Activated CD4-positive, alpha-beta T cell treated with anti-CD3 and anti-CD28 coated beads for 36 hours (primary cell): ENCODE measurements at regions of chr10 and their contacts with region 1.

Region 1: DNA sequence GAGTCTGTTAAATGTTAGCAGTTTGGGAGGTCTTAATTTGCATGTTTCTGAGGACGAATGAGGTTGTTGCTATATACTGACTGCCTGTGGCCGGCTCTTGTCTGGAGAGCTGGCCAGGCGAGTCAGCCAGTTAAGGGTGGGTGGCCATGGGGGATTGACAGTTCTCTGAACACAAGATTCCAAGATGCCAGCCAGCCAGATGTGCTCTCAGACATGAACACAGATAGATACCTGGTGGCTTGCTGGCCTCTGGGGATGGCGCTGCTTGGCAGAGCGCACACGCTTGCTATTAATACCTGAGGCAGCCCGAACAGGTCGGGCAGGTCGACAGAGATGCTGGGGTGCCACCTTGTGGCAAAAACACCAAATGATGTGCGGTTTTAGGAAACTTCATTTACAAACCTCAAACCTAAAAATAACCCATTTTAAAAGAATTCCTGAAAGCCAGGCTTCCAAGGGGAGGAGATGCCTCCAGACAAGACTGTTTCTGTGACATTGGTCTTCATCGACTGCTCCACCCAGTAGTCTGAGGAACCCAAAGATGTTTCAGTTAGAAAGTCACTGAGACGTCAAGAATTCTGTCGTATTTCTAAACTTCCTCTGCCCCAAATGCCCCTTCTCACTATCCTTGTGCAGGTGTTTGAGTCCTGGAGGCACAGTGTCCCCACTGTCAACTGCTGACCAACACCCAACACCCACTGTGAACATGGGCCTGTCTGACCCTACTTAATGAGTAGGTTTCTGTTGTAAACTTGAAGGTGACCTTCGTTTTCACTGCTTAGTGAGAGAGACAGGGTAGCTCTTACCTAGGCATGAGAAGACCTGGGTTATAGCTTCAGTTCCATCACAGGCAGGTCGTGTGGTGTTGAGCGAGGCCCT is 123.4 kb downstream of the NT5C2 start:
- DNase-seq: peak; percentile 84
- ATAC-seq: peak; percentile 86
- H3K4me3 Mint-ChIP-seq: no peak overlapping the region
- H3K27ac Mint-ChIP-seq: no peak overlapping the region
- H3K4me1 Mint-ChIP-seq: peaks cover 12% of the 10 kb centered on the region
- H3K27me3 Mint-ChIP-seq: no peaks in the 10 kb centered on the region

Region 2: GRCh38 chr10:102729029-102730026 is 340.4 kb before region 1 on chr10:
- CTCF ChIA-PET with region 1: interaction called, 3 read pairs
- POLR2A ChIA-PET with region 1: no interaction called
- intact Hi-C with region 1: loop called in 1 of 2 experiments (anchors 5 kb)
- DNase-seq: peak; percentile 80
- ATAC-seq: peak; percentile 71
- H3K4me3 Mint-ChIP-seq: no peak overlapping the region
- H3K27ac Mint-ChIP-seq: no peak overlapping the region
- H3K4me1 Mint-ChIP-seq: no peaks in the 10 kb centered on the region
- H3K27me3 Mint-ChIP-seq: no peaks in the 10 kb centered on the region

Region 3: DNA sequence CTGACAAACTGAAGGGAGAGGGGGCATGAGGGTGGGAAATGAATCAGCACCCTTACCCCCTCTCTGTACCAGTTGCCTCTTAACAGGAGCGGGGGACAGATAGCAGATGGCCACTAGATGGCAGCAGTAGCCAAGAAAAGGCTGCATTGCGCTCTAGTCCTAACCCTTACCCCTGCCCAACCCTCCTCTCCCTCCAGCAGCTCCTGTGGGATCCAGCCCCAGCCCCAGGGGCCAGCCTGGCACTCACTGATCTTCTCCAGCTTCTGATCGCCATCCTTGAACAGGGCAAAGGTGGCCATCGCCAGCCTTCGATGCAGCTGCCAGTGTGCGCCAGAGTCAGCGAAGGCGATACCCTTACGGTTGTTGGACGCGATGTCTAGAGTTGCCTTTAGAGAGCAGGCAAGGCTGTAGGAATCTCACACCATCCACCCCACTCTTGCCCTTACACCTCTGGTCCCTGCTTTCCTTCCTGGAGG is 234.6 kb before region 1 on chr10:
- CTCF ChIA-PET with region 1: interaction called, 4 read pairs
- POLR2A ChIA-PET with region 1: no interaction called
- intact Hi-C with region 1: loop called (anchors 1 kb)
- DNase-seq: peak; percentile 86
- ATAC-seq: peak; percentile 99
- H3K4me3 Mint-ChIP-seq: no peak overlapping the region
- H3K27ac Mint-ChIP-seq: no peak overlapping the region
- H3K4me1 Mint-ChIP-seq: no peaks in the 10 kb centered on the region
- H3K27me3 Mint-ChIP-seq: peaks cover 2% of the 10 kb centered on the region

Region 4: GRCh38 chr10:102904346-102904745 is 165.3 kb before region 1 on chr10:
- CTCF ChIA-PET with region 1: interaction called, 10 read pairs
- POLR2A ChIA-PET with region 1: no interaction called
- intact Hi-C with region 1: no loop called
- DNase-seq: no peak
- ATAC-seq: no peak
- H3K4me3 Mint-ChIP-seq: no peak overlapping the region
- H3K27ac Mint-ChIP-seq: no peak overlapping the region
- H3K4me1 Mint-ChIP-seq: no peaks in the 10 kb centered on the region
- H3K27me3 Mint-ChIP-seq: no peaks in the 10 kb centered on the region

Region 5: DNA sequence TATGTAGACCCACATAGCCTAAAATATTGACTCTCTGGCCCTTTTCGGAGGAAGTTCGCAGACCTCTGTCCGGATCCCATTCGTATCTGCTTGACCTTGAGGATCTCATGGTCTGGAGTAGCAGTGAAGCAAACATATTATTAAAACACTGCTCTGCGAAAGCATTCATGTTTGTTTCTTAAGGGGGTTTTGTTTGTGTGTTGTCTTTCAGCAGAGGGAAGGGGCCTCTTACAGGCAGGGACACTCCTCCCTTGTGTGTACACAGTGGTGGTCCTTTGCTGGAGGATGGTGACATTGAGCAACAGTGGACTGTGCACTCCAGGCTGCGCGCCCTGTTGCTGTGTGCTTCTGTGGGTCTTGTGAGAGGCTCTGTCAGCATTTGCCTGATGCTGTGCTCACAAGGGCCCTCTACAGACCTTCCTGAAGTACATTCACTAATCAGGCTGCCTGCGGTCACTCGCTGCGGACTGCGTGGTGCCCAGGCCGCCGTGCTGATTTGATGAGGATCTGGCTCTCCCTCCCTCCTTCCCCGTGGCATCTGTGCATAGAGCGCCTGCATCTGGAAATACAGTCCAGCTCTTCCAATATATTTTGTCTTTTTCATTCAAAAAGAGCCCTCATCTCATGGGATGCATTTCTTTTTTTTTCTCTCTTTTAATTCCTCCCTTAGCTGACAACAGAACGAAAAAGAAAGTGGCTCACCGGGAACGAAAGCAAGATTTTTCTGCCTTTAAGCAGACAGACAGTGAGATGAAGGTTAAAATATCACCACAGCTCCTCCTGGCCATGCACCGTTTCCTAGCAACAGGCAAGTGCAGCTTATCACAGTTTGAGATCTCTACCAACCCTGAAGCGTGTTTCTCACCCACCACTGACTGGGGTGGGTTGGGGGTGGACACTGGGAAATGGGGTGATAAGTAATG is 15.8 kb before region 1 on chr10:
- CTCF ChIA-PET with region 1: interaction called, 3 read pairs
- POLR2A ChIA-PET with region 1: no interaction called
- intact Hi-C with region 1: loop called in 1 of 2 experiments (anchors 1 kb)
- DNase-seq: peak; percentile 65
- ATAC-seq: peak; percentile 85
- H3K4me3 Mint-ChIP-seq: peak overlapping the region; percentile 61
- H3K27ac Mint-ChIP-seq: peak overlapping the region; percentile 65
- H3K4me1 Mint-ChIP-seq: peaks cover 20% of the 10 kb centered on the region
- H3K27me3 Mint-ChIP-seq: no peaks in the 10 kb centered on the region

Region 6: DNA sequence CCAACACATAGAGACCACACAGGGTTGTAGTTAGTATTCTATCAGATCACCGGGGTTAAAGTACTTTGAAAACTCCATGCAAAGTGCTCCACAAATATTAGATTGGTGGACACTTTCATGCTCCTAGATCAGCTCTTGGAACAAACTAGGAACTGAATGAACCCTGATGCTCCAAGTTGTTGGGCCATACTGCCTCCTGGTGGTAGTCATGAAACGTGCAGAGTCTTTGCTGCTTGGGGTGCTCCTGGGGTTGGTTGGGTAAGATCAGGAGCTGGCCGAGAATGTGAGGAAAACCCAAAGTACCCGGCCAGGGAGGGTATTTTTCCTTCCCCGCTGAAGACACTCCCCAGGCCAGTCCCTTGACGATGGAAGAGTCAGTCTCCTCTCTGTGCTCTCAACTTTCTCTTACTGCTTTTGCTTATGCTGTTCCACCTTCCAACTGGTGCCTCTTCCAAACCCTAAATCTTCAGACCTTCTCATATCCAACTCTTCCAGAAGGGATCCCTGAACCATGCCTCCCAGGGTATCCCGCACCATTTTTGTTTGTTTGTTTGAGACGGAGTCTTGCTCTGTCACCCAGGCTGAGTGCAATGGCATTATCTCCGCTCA is 175.1 kb after region 1 on chr10:
- CTCF ChIA-PET with region 1: interaction called, 11 read pairs
- POLR2A ChIA-PET with region 1: no interaction called
- intact Hi-C with region 1: loop called in 1 of 2 experiments (anchors 2 kb)
- DNase-seq: peak; percentile 80
- ATAC-seq: peak; percentile 81
- H3K4me3 Mint-ChIP-seq: no peak overlapping the region
- H3K27ac Mint-ChIP-seq: no peak overlapping the region
- H3K4me1 Mint-ChIP-seq: peaks cover 12% of the 10 kb centered on the region
- H3K27me3 Mint-ChIP-seq: peaks cover 2% of the 10 kb centered on the region